Activated B cell treated with CpG ODN at 0.5 μM for 24 hours (primary cell): ENCODE measurements at regions of chr22 and their contacts with region 1.

Region 1: DNA sequence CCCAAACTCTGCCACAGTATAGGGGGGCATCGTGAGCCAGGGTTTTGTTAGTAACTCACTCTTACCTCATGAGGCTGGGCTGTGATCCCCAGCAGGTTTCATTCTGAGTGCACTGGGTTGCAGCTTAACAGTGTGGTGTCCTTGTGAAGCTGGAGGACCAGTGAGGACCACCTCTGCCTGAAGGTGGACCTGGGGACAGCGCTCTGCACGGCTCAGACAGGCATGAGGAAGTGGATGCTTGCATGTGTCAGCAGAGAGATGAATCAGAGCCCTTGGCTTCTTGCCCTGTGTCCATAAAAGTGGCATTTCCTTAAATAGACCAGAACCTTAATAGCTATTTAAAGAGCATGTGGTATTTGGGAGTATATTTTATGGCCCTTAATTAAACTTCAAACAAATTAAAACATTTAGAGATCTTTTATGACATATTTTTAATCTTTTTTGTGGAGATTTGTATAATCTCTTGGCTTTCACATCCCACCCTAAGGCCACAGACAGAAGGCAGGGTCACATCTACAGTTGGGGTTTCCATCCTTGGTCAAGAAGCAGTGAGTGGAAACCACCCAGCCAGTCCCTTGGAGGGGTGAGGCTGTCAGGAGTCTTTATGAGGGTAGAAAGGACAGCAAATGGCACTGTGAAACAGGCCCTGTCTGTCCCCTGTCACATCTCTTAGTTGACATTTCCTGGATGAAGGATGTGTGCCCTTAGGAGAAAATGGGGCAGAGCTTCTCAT is 24.8 kb upstream of the ADORA2A start:
- DNase-seq: no peak
- ATAC-seq: peak; percentile 60
- H3K4me3 Mint-ChIP-seq: peak overlapping the region; percentile 57
- H3K27ac Mint-ChIP-seq: peak overlapping the region; percentile 82
- H3K4me1 Mint-ChIP-seq: peaks cover 88% of the 10 kb centered on the region
- H3K27me3 Mint-ChIP-seq: no peaks in the 10 kb centered on the region
- CTCF ChIP-seq: no peak

Region 2: DNA sequence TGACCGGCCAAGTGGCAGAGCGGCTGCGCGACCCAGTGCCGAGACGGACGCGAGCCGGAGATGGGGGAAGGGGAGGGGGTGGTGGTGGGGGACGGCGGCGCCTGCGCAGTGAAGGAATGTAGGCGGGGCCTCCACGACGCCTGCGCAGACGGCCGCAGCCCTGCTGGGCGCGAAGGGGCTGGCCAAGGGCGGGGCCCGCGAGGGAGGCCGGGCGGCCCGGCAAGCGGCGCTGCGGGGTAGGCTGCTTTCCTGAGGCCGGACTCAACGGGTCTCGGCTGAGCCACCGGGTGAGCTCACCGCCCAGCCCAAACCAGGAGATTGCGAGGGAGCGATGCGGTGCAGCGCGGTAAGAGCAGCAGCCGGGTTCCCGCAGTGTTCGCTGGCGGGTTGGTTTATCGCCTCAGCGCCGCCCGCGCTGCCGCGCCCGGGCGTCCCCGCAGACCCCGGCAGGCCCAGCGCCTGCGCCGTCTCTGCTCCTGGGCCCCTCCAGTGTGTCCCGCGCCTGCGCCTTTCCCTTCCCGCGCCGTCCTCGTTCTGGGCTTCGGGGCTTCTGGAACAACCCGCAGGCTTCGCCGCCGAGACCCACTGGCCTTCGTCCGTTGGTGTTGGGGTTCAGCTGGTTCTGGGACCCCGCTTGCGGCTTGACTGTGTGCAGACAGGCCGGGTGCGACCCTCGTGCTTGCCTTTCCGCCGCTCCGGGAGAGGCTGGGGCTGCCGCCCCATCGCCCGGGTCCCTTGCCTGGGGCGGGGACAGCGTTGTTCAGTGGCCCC is 131.8 kb before region 1 on chr22 and contains the start of gene SPECC1L:
- CTCF ChIA-PET with region 1: no interaction called
- POLR2A ChIA-PET with region 1: no interaction called
- intact Hi-C with region 1: loop called (anchors 5 kb)
- DNase-seq: peak; percentile 96
- ATAC-seq: peak; percentile 90
- H3K4me3 Mint-ChIP-seq: peak within 1 kb of the TSS; percentile 90
- H3K27ac Mint-ChIP-seq: peak within 1 kb of the TSS; percentile 82
- H3K4me1 Mint-ChIP-seq: peaks cover 45% of the 10 kb centered on the region
- H3K27me3 Mint-ChIP-seq: no peaks in the 10 kb centered on the region
- CTCF ChIP-seq: no peak
- total RNA-seq, gene SPECC1L: 59.0 and 64.5 TPM in 2 replicates

Region 3: GRCh38 chr22:24367841-24368240 is 34.8 kb before region 1 on chr22:
- CTCF ChIA-PET with region 1: no interaction called
- POLR2A ChIA-PET with region 1: no interaction called
- intact Hi-C with region 1: no loop called
- DNase-seq: no peak
- ATAC-seq: no peak
- H3K4me3 Mint-ChIP-seq: no peak overlapping the region
- H3K27ac Mint-ChIP-seq: no peak overlapping the region
- H3K4me1 Mint-ChIP-seq: no peaks in the 10 kb centered on the region
- H3K27me3 Mint-ChIP-seq: no peaks in the 10 kb centered on the region
- CTCF ChIP-seq: no peak